Ovary (tissue), 10 donors: ENCODE measurements at regions of chr15 and their contacts with region 1.

Region 1: GRCh38 chr15:69475769-69476358 is 23.2 kb downstream of the RPLP1 start:
- DNase-seq: peak; percentile 47 to 84 (median 75)
- H3K4me3 ChIP-seq: no peak overlapping the region
- H3K27ac ChIP-seq: no peak overlapping the region
- H3K4me1 ChIP-seq: no peaks in the 10 kb centered on the region
- H3K27me3 ChIP-seq: no peaks in the 10 kb centered on the region
- CTCF ChIP-seq: peak; percentile 62 to 71 (median 69)
- EP300 ChIP-seq: no peak
- POLR2A ChIP-seq: no peak

Region 2: DNA sequence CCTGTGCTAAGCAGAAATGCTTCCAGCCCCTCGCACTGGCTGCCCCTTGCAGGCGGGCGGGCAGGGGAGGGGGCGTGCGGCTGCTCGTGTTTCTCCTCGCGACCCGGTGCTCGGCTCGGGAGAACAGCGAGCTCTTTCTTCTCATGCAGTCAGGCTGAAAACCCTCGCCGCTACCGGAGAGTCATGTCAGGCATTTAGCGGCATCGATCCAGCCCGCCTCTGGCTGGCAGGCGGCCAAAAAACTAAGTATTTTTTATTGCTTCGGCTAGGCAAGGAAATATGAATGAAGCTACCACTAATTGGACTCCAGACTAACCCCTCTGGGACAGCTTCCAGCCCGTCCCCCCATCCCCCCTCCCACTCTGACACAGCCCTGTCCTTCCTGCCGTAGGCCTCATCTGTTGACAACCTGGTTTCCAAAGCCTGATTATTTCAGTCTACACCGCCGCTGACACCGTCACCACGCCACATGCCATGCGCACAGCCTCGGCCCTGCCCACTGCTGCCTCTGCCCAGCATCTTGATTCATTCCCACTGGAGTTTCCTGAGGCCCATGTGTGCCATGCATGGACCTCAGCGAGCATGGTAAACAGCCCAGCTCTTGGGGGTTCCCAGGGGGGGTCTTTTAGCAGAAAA is 586.6 kb after region 1 on chr15:
- intact Hi-C with region 1: loop called in 1 of 4 experiments (anchors 10 kb)
- DNase-seq: peak; percentile 80 to 90 (median 88)
- H3K4me3 ChIP-seq: no peak overlapping the region
- H3K27ac ChIP-seq: no peak overlapping the region
- H3K4me1 ChIP-seq: peaks cover 8% of the 10 kb centered on the region
- H3K27me3 ChIP-seq: no peaks in the 10 kb centered on the region
- CTCF ChIP-seq: no peak
- EP300 ChIP-seq: no peak
- POLR2A ChIP-seq: no peak

Region 3: GRCh38 chr15:70466895-70467529 is 991.1 kb after region 1 on chr15:
- intact Hi-C with region 1: loop called in 2 of 4 experiments (anchors 5 to 10 kb)
- DNase-seq: peak; percentile 30 to 67 (median 53)
- H3K4me3 ChIP-seq: no peak overlapping the region
- H3K27ac ChIP-seq: no peak overlapping the region
- H3K4me1 ChIP-seq: no peaks in the 10 kb centered on the region
- H3K27me3 ChIP-seq: no peaks in the 10 kb centered on the region
- CTCF ChIP-seq: peak in 1 of 3 donors; percentile 32
- EP300 ChIP-seq: no peak
- POLR2A ChIP-seq: no peak

Region 4: GRCh38 chr15:70474471-70475396 is 998.9 kb after region 1 on chr15:
- intact Hi-C with region 1: loop called in 2 of 4 experiments (anchors 5 to 10 kb)
- DNase-seq: no peak
- H3K4me3 ChIP-seq: no peak overlapping the region
- H3K27ac ChIP-seq: no peak overlapping the region
- H3K4me1 ChIP-seq: peaks cover 2% of the 10 kb centered on the region
- H3K27me3 ChIP-seq: no peaks in the 10 kb centered on the region
- CTCF ChIP-seq: no peak
- EP300 ChIP-seq: no peak
- POLR2A ChIP-seq: no peak

Region 5: GRCh38 chr15:70488002-70488605 is 1012.2 kb after region 1 on chr15:
- intact Hi-C with region 1: loop called in 3 of 4 experiments (anchors 2 to 10 kb)
- DNase-seq: peak; percentile 38 to 77 (median 71)
- H3K4me3 ChIP-seq: no peak overlapping the region
- H3K27ac ChIP-seq: no peak overlapping the region
- H3K4me1 ChIP-seq: peaks cover 2% of the 10 kb centered on the region
- H3K27me3 ChIP-seq: no peaks in the 10 kb centered on the region
- CTCF ChIP-seq: peak; percentile 56 to 86 (median 65)
- EP300 ChIP-seq: no peak
- POLR2A ChIP-seq: no peak